ENCODE measurements at regions of chr3 and their contacts with region 1.

Region 1: GRCh38 chr3:37855363-37855970 is 6.2 kb upstream of the CTDSPL start:
- DNase-seq: peak; percentile 89
- ATAC-seq: peak; percentile 65
- H3K4me3 Mint-ChIP-seq: no peak overlapping the region
- H3K27ac Mint-ChIP-seq: no peak overlapping the region
- H3K4me1 Mint-ChIP-seq: peaks cover 6% of the 10 kb centered on the region
- H3K27me3 Mint-ChIP-seq: no peaks in the 10 kb centered on the region

Region 2: GRCh38 chr3:37519661-37520060 is 335.8 kb before region 1 on chr3:
- CTCF ChIA-PET with region 1: no interaction called
- POLR2A ChIA-PET with region 1: no interaction called
- intact Hi-C with region 1: no loop called
- DNase-seq: no peak
- ATAC-seq: no peak
- H3K4me3 Mint-ChIP-seq: no peak overlapping the region
- H3K27ac Mint-ChIP-seq: no peak overlapping the region
- H3K4me1 Mint-ChIP-seq: no peaks in the 10 kb centered on the region
- H3K27me3 Mint-ChIP-seq: peaks cover 3% of the 10 kb centered on the region

Region 3: GRCh38 chr3:37751967-37752648 is 103.4 kb before region 1 on chr3:
- CTCF ChIA-PET with region 1: no interaction called
- POLR2A ChIA-PET with region 1: no interaction called
- intact Hi-C with region 1: no loop called
- DNase-seq: no peak
- ATAC-seq: no peak
- H3K4me3 Mint-ChIP-seq: no peak overlapping the region
- H3K27ac Mint-ChIP-seq: no peak overlapping the region
- H3K4me1 Mint-ChIP-seq: no peaks in the 10 kb centered on the region
- H3K27me3 Mint-ChIP-seq: peaks cover 13% of the 10 kb centered on the region

Region 4: GRCh38 chr3:37819591-37819990 is 35.9 kb before region 1 on chr3:
- CTCF ChIA-PET with region 1: no interaction called
- POLR2A ChIA-PET with region 1: no interaction called
- intact Hi-C with region 1: no loop called
- DNase-seq: no peak
- ATAC-seq: no peak
- H3K4me3 Mint-ChIP-seq: no peak overlapping the region
- H3K27ac Mint-ChIP-seq: no peak overlapping the region
- H3K4me1 Mint-ChIP-seq: no peaks in the 10 kb centered on the region
- H3K27me3 Mint-ChIP-seq: peaks cover 1% of the 10 kb centered on the region

Region 5: DNA sequence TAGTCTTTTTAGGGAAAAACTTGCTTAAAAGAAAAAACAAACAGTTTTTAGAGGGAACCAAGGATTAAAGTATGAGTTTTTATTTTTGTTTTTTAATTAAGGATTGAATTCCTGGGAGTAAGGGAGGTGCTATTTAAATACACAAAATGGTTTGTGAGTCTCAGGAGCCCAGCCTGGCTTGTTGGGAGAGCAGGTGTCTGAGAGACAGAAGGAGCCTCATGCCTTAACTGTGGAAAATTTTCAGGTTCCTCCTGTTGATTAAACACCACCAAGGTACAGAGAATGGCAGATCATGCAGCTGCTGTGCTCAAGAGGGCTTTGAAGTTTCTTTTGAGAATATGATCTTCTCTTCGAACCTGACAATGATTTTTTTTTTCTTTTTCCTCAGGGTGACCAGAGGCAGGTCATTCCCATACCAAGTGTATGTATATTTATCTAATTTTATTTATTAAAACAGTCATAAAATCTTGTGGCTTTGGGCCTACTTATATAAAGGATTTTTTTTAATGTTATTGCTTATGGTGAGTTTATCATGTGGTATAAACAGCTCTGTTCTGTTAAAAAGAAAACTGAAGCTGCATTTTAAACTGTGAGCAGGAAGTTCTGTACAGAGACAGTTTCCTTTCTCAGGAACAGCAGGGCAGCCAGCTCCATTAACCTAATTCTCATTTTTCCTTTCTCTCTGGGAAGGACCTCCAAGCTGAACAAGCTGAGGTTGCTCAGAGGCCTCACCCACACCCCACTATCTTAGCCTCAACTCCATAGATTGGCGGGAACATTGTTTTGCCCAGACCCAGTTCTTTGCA is 101.5 kb after region 1 on chr3:
- CTCF ChIA-PET with region 1: interaction called, 10 read pairs
- POLR2A ChIA-PET with region 1: no interaction called
- intact Hi-C with region 1: no loop called
- DNase-seq: no peak
- ATAC-seq: peak; percentile 51
- H3K4me3 Mint-ChIP-seq: no peak overlapping the region
- H3K27ac Mint-ChIP-seq: peak overlapping the region; percentile 79
- H3K4me1 Mint-ChIP-seq: peaks cover 24% of the 10 kb centered on the region
- H3K27me3 Mint-ChIP-seq: no peaks in the 10 kb centered on the region

Region 6: DNA sequence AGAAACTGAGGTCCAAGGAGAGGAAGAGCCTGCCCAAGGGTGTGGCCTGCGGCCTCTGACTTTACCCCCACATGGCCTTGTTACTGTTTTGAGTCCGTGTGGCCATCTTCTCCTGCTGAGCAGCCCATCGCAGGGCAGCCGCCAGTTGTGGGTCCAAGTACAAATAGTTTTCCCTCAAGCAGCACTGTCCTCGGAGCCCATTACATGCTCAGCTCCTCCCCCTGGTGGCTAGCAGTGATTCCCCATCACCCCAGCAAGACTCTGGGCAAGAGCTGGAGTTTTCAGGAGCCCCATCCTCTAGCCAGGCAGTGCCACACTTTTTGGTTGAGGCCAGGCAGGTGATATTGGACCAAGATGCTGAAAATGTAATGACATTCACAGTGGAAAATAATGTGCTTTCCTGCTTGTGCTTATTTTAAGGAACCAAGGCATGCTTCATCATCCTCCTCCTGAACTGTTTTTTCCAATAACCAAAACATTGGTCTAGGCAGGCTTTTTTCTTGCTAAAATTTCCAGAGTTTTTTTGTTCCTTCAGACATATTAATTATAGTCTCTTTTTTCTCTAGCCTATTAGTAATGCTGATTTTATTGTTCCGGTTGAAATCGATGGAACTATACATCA is 111.9 kb after region 1 on chr3:
- CTCF ChIA-PET with region 1: interaction called, 16 read pairs
- POLR2A ChIA-PET with region 1: interaction called, 3 read pairs
- intact Hi-C with region 1: loop called (anchors 1 kb)
- DNase-seq: peak; percentile 79
- ATAC-seq: peak; percentile 86
- H3K4me3 Mint-ChIP-seq: no peak overlapping the region
- H3K27ac Mint-ChIP-seq: no peak overlapping the region
- H3K4me1 Mint-ChIP-seq: no peaks in the 10 kb centered on the region
- H3K27me3 Mint-ChIP-seq: no peaks in the 10 kb centered on the region

Region 7: GRCh38 chr3:37974121-37975083 is 118.9 kb after region 1 on chr3:
- CTCF ChIA-PET with region 1: interaction called, 16 read pairs
- POLR2A ChIA-PET with region 1: no interaction called
- intact Hi-C with region 1: no loop called
- DNase-seq: peak; percentile 83
- ATAC-seq: peak; percentile 98
- H3K4me3 Mint-ChIP-seq: no peak overlapping the region
- H3K27ac Mint-ChIP-seq: no peak overlapping the region
- H3K4me1 Mint-ChIP-seq: peaks cover 2% of the 10 kb centered on the region
- H3K27me3 Mint-ChIP-seq: no peaks in the 10 kb centered on the region

Region 8: DNA sequence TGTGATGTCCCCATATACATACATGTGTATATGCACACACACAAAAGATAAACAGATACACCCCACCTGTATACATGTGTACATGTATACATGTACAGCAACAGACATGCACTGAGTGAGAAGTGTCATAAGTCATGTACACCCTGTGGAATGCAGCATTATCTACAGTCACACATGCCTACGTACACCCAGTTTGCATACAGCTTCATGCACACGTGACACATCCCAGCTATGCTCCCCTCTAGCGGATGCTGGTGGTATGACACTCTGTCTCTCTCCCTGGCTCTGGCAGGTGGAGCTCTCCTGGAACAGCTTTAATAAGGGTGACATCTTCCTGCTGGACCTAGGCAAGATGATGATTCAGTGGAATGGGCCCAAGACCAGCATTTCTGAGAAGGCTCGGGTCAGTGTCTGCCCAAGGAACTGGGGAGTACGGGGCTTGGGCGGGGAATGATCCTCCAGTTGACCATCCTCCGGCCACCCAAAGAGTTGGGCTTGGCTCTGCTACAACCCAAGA is 141.4 kb after region 1 on chr3:
- CTCF ChIA-PET with region 1: interaction called, 16 read pairs
- POLR2A ChIA-PET with region 1: no interaction called
- intact Hi-C with region 1: no loop called
- DNase-seq: peak; percentile 92
- ATAC-seq: peak; percentile 57
- H3K4me3 Mint-ChIP-seq: no peak overlapping the region
- H3K27ac Mint-ChIP-seq: peak overlapping the region; percentile 96
- H3K4me1 Mint-ChIP-seq: peaks cover 49% of the 10 kb centered on the region
- H3K27me3 Mint-ChIP-seq: no peaks in the 10 kb centered on the region

Region 9: DNA sequence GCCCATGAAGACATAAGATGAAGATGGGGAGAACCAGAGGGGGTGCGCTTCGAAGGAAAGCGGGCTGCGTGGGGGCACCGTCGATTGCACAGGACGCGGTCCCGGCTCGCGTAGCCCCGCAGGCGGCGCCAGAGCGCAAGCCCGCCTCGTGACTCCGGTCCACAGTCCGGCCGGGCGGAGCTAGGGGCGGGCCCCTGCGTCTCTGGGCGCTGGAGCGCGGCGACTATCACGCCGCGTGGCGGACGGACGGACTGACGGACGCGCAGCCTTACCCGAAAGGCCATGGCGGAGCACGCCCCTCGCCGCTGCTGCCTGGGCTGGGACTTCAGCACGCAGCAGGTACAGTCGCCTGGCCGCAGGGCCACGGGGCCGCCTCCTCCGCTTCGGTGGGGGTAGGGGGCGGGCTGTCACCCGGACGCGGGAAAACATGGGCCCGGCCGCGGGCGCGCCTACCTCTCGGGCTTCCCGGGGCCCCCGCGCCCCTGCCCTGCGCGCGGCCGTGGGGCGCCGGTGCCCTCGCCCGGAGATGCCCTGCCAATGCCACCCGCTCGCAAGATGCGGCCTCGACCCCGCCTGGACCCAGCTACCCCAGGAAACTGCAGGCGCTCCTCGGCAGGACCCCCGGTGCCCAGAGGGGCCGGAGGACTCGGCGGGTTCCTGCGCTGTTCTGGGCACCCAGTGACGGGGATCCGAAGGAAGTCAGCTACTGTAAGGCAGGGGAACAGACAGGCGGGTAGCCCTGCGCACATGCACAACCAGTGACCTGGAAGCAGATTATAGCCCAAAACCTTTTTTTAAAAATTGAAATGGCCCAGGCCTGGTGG is 491.3 kb after region 1 on chr3 and contains the start of gene XYLB:
- CTCF ChIA-PET with region 1: no interaction called
- POLR2A ChIA-PET with region 1: no interaction called
- intact Hi-C with region 1: loop called in 1 of 2 experiments (anchors 5 kb)
- DNase-seq: peak; percentile 89
- ATAC-seq: peak; percentile 98
- H3K4me3 Mint-ChIP-seq: peak within 1 kb of the TSS; percentile 70
- H3K27ac Mint-ChIP-seq: no peak within 1 kb of the TSS
- H3K4me1 Mint-ChIP-seq: peaks cover 2% of the 10 kb centered on the region
- H3K27me3 Mint-ChIP-seq: peaks cover 2% of the 10 kb centered on the region
- total RNA-seq, gene XYLB: 5.0 to 5.3 TPM

Region 10: DNA sequence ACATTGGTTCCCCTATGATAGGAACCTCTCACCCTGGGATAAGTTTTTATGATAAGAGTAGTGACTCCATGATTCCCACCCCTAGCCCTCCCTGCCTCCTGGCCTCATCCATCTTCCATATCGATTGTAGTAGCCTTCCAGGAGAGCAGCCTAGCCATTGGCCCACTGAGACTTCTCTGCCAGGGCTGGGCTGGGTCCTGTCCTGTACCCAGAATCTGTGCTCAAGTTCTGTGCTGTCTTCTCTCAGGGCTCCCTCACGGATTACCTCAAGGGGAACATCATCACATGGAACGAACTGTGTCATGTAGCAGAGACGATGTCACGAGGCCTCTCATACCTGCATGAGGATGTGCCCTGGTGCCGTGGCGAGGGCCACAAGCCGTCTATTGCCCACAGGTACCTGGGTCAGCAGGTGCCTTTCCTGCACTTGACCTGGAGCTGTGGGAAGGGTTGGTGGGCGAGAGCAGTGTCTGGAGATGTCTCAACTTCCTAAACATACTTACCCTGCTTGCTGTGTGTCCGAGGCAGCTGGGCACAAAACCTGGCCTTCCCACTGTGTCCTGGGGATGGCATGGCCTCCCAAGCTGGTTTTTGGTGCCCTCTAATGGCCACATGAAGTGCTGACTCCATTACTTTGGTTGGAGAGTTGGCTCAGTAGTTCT is 624.1 kb after region 1 on chr3:
- CTCF ChIA-PET with region 1: no interaction called
- POLR2A ChIA-PET with region 1: no interaction called
- intact Hi-C with region 1: loop called in 1 of 2 experiments (anchors 2 kb)
- DNase-seq: peak; percentile 64
- ATAC-seq: peak; percentile 78
- H3K4me3 Mint-ChIP-seq: no peak overlapping the region
- H3K27ac Mint-ChIP-seq: no peak overlapping the region
- H3K4me1 Mint-ChIP-seq: peaks cover under 1% of the 10 kb centered on the region
- H3K27me3 Mint-ChIP-seq: no peaks in the 10 kb centered on the region

Measured in activated CD4-positive, alpha-beta T cell treated with anti-CD3 and anti-CD28 coated beads for 36 hours (primary cell).